Ascending aorta (tissue), 2 donors: ENCODE measurements at regions of chr12 and their contacts with region 1.

Region 1: GRCh38 chr12:95117178-95117599 is 43.8 kb upstream of the NR2C1 start:
- DNase-seq: peak in 1 of 2 donors; percentile 85
- H3K4me3 ChIP-seq: no peak overlapping the region
- H3K27ac ChIP-seq: peak overlapping the region; percentile 71 to 77
- H3K4me1 ChIP-seq: peaks cover 6 to 18% of the 10 kb centered on the region in 2 donors
- H3K27me3 ChIP-seq: no peaks in the 10 kb centered on the region
- CTCF ChIP-seq: peak; percentile 61 to 72 (median 65)

Region 2: DNA sequence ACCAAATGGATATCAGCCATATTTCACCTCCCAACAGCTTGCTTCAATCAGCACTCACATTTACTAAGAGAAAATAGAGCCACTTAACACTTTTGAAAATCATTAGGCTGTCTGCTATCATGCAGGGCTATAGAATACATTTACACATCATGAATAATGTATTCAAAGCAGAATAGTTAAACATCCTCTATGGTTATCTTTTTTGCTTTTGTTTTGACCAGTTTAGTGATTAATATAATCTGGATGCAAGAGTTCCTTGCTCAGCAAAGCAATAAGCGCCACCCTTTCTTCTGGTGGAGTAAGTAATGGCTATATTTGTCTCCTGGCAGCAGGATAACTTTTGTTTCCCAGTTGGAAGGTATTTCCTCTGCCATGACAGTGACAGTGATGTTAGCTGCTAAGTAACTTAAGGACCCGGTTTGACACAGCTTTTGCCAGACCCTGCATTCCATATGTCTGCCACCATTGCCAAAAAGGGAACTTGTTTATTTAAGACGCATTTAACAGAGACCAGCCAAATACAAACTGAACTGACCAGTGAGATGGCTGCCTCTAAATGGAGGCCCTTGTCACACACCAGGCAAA is 26.5 kb after region 1 on chr12:
- intact Hi-C with region 1: loop called (anchors 1 kb)
- DNase-seq: no peak
- H3K4me3 ChIP-seq: no peak overlapping the region
- H3K27ac ChIP-seq: peak overlapping the region; percentile 39 to 60
- H3K4me1 ChIP-seq: peaks cover 0 to 10% of the 10 kb centered on the region in 2 donors
- H3K27me3 ChIP-seq: no peaks in the 10 kb centered on the region
- CTCF ChIP-seq: no peak

Region 3: DNA sequence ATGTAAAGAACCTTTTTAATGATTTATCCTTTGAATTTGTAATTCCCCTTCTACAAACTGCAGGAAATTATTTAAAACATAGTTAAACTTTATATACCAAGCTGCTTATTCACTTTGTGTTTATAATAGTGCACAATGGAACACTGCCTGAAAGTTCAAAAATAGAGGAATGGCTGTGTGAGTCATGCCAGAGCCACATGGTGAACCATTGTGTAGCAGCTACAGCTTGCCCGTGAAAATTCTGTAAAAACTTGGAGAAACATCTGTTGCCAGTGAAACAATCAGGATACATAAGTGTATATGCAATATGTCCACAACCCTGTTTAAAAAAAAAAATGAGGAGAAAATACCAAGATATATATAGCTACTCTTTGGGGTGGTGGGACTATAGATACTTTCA is 159.9 kb after region 1 on chr12:
- intact Hi-C with region 1: loop called (anchors 5 kb)
- DNase-seq: no peak
- H3K4me3 ChIP-seq: no peak overlapping the region
- H3K27ac ChIP-seq: peak overlapping the region; percentile 15 to 20
- H3K4me1 ChIP-seq: peaks cover 0 to 8% of the 10 kb centered on the region in 2 donors
- H3K27me3 ChIP-seq: no peaks in the 10 kb centered on the region
- CTCF ChIP-seq: no peak

Region 4: DNA sequence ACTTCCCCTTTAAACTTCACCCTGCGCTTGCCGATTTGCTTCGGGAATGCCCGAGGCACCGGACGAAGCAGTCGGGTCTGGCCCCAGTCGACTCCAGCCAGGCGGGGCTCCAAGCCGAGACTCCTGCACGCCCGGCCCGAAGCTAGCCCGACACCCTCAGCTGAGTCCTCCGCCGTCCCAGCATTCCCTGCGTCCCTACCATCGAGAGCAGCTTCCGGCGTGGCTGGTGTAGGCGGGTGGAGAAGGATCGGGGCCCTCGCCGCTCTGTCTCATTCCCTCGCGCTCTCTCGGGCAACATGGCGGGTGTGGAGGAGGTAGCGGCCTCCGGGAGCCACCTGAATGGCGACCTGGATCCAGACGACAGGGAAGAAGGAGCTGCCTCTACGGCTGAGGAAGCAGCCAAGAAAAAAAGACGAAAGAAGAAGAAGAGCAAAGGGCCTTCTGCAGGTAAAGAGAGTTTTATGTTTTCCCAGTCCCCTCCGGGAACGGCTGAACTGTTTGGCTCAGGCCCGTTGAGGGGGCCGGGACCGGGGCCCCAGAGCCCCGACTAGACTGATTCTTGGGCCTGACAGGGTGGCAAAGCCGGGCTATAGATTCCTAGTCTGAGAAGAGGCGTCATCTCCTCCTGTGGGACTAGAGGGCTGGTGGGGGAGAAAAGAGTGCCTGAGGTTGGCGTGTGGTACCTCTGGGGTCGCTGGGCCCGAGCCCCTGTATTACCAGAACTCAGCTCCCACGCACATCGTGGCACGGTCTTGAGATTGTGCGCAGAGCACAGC is 356.9 kb after region 1 on chr12 and contains the start of gene METAP2:
- intact Hi-C with region 1: loop called (anchors 10 kb)
- DNase-seq: peak; percentile 83 to 98
- H3K4me3 ChIP-seq: peak within 1 kb of the TSS; percentile 72 to 97
- H3K27ac ChIP-seq: peak within 1 kb of the TSS; percentile 94 to 96
- H3K4me1 ChIP-seq: peaks cover 3 to 25% of the 10 kb centered on the region in 2 donors
- H3K27me3 ChIP-seq: no peaks in the 10 kb centered on the region
- CTCF ChIP-seq: no peak
- total RNA-seq, gene METAP2: 20.6 TPM